Lower lobe of right lung (tissue), 2 donors: ENCODE measurements at regions of chr10 and their contacts with region 1.

Region 1: DNA sequence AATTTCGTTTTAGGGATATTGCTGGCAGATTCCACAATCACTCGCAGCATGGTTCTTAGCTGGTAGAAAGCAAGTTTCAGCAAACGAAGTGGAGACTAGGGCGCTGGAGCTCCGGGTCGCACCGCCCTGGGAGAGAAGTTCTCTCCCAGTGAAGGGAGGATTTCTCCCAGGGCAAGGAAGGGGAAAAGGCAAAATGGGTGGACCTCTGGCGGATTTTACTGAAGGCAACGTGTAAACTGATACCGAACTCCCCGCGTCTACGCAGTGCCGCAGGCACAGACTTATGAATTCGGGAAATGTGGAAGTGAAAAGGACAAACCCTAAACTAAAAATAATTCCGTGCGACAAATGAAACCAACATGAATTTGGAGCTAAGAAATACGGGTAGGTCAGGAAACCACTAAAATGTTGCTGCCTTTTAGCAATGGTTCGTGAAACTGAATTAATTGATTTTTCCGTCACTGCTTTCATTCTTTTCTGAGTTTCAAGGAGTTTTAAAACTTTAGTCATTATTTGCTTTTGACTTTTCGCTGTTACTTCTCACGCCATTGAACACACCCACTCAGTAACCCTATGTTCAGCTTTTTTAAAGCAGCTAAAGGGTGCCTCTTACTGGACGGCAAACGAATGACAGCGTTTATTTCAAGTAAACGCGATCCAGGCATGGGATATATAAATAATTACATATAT is at the start of gene MYOF:
- DNase-seq: peak; percentile 62
- ATAC-seq: peak; percentile 91
- H3K4me3 ChIP-seq: peak within 1 kb of the TSS; percentile 63
- H3K27ac ChIP-seq: peak within 1 kb of the TSS; percentile 86
- H3K4me1 ChIP-seq: peaks cover 30% of the 10 kb centered on the region
- H3K27me3 ChIP-seq: no peaks in the 10 kb centered on the region
- CTCF ChIP-seq: peak; percentile 63
- total RNA-seq, gene MYOF: 127 TPM

Region 2: GRCh38 chr10:93376372-93377293 is 105.7 kb before region 1 on chr10:
- intact Hi-C with region 1: loop called (anchors 5 kb)
- DNase-seq: no peak
- ATAC-seq: peak; percentile 94 to 96
- H3K4me3 ChIP-seq: no peak overlapping the region
- H3K27ac ChIP-seq: peak overlapping the region; percentile 67
- H3K4me1 ChIP-seq: peaks cover 24% of the 10 kb centered on the region
- H3K27me3 ChIP-seq: no peaks in the 10 kb centered on the region
- CTCF ChIP-seq: peak; percentile 90

Region 3: DNA sequence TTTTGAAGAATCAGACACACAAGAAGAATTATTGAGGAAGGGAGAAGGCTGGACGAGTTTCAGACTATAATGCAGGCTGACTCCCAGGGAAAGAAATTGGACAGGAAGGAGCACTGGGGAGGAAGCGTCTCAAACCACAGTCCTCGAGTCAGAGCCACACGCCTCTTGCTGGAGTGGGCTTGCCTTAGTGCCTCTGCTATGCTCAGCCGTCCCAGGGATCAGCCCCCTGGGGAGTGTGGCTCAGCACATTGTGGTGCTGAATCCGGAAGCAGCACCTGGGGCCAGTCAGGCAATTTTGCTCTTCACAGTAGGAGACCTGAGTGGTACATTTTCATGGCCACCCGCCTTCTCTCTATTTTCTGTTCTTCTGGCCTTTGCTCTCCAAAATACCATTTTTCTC is 344.1 kb after region 1 on chr10:
- intact Hi-C with region 1: no loop called
- DNase-seq: no peak
- ATAC-seq: no peak
- H3K4me3 ChIP-seq: no peak overlapping the region
- H3K27ac ChIP-seq: no peak overlapping the region
- H3K4me1 ChIP-seq: no peaks in the 10 kb centered on the region
- H3K27me3 ChIP-seq: no peaks in the 10 kb centered on the region
- CTCF ChIP-seq: no peak